Natural killer cell (primary cell): ENCODE measurements at regions of chr21 and their contacts with region 1.

Region 1: GRCh38 chr21:18204931-18205330 is 39.7 kb upstream of the CHODL start:
- DNase-seq: peak in 1 of 2 donors; percentile 2
- ATAC-seq: no peak
- H3K4me3 ChIP-seq: no peak overlapping the region
- H3K4me3 Mint-ChIP-seq: no peak overlapping the region
- H3K27ac ChIP-seq: no peak overlapping the region
- H3K27ac Mint-ChIP-seq: no peak overlapping the region
- H3K4me1 ChIP-seq: no peaks in the 10 kb centered on the region
- H3K4me1 Mint-ChIP-seq: no peaks in the 10 kb centered on the region
- H3K27me3 ChIP-seq: no peaks in the 10 kb centered on the region
- H3K27me3 Mint-ChIP-seq: peaks cover 0 to 4% of the 10 kb centered on the region in 2 donors
- CTCF ChIP-seq: peak; percentile 33

Region 2: DNA sequence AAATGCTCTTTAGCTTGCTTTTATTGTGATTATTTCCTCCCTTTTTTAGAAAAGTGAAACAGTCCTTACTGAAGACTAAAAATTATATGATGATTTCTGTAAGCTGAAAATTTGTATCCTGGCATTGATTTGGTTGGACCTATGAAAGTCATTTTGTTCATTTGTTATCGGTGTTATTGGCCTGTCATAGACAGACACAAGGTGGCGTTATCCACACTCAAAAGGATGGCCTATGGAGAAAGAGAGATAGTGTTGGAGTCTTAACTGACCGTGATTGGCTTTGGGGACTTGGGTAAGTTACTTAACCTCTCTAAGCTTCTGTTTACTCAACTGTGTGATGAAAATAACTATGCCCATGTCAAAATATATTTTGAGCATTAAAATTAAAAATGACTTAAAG is 163.9 kb before region 1 on chr21:
- intact Hi-C with region 1: loop called (anchors 1 kb)
- DNase-seq: peak in 1 of 2 donors; percentile 34
- ATAC-seq: peak in 2 of 3 donors; percentile 34 to 69
- H3K4me3 ChIP-seq: no peak overlapping the region
- H3K4me3 Mint-ChIP-seq: no peak overlapping the region
- H3K27ac ChIP-seq: no peak overlapping the region
- H3K27ac Mint-ChIP-seq: no peak overlapping the region
- H3K4me1 ChIP-seq: no peaks in the 10 kb centered on the region
- H3K4me1 Mint-ChIP-seq: no peaks in the 10 kb centered on the region
- H3K27me3 ChIP-seq: no peaks in the 10 kb centered on the region
- H3K27me3 Mint-ChIP-seq: peaks cover 0 to 1% of the 10 kb centered on the region in 2 donors
- CTCF ChIP-seq: peak; percentile 56